Left lung (tissue), 14 donors: ENCODE measurements at regions of chr11 and their contacts with region 1.

Region 1: GRCh38 chr11:75204685-75205563 is 35.6 kb upstream of the TPBGL start:
- DNase-seq: peak; percentile 36 to 93 (median 80)
- ATAC-seq: peak; percentile 94
- H3K4me3 ChIP-seq: no peak overlapping the region
- H3K27ac ChIP-seq: peak overlapping the region in 1 of 2 donors; percentile 13
- H3K4me1 ChIP-seq: peaks cover 0 to 15% of the 10 kb centered on the region in 2 donors
- H3K27me3 ChIP-seq: no peaks in the 10 kb centered on the region
- CTCF ChIP-seq: peak; percentile 89 to 92

Region 2: DNA sequence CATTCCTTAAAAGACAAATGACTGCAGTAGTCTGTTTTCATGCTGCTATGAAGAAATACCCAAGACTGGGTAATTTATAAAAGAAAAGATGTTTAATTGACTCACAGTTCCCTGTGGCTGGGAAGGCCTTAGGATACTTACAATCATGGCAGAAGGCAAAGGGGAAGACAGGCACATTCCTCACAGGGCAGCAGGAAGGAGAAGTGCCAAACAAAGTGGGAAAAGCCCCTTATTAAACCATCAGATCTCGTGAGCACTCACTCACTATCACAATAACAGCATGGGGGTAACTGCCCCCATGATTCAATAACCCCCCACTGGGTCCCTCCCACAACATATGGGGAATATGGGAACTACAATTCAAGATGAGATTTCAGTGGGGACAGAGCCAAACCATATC is 91.9 kb before region 1 on chr11:
- intact Hi-C with region 1: no loop called
- DNase-seq: no peak
- ATAC-seq: no peak
- H3K4me3 ChIP-seq: no peak overlapping the region
- H3K27ac ChIP-seq: no peak overlapping the region
- H3K4me1 ChIP-seq: no peaks in the 10 kb centered on the region
- H3K27me3 ChIP-seq: no peaks in the 10 kb centered on the region
- CTCF ChIP-seq: no peak

Region 3: GRCh38 chr11:75147875-75148263 is 57.1 kb before region 1 on chr11:
- intact Hi-C with region 1: loop called in 1 of 2 experiments (anchors 5 kb)
- DNase-seq: peak in 1 of 4 donors; percentile 76
- ATAC-seq: peak; percentile 29
- H3K4me3 ChIP-seq: no peak overlapping the region
- H3K27ac ChIP-seq: peak overlapping the region in 1 of 2 donors; percentile 73
- H3K4me1 ChIP-seq: peaks cover 5 to 75% of the 10 kb centered on the region in 2 donors
- H3K27me3 ChIP-seq: no peaks in the 10 kb centered on the region
- CTCF ChIP-seq: no peak